CD4-positive, alpha-beta T cell (primary cell): ENCODE measurements at regions of chr16 and their contacts with region 1.

Region 1: DNA sequence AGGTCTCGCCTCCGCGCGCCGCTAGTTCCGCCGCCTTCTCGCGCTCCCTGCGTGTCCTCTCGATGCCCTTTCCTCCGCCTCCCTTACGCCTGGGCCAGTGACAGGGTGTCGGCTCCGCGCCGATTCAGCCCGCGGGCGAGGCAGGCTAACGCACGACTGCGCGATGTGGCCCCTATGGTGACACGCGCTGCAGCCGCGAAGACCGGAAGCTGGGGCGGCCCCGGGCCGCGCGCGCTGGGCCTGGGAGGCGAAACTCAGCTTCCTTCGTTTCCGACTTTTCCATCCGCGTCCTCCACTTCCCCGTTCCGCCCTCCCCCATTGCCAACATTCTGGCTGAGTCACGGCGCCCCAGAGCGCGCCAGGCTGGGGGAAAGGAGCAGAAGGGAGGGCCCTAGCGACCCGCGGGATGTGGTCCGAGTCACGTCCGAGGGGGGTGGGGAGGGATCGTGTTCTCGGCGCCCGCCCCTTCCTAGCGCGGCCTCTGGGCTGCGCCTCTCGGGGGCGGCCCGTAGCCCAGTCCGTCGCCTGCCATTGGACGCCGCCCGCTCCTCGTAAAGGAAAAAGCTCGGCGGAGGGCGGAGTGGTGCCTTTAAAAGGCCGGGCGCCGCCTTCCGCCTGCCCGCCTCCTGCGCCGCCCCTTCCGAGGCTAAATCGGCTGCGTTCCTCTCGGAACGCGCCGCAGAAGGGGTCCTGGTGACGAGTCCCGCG is at the start of gene ALDOA:
- DNase-seq: peak; percentile 85 to 97 (median 93)
- ATAC-seq: peak; percentile 80
- H3K4me3 ChIP-seq: peak within 1 kb of the TSS; percentile 100
- H3K4me3 Mint-ChIP-seq: peak within 1 kb of the TSS; percentile 100
- H3K27ac ChIP-seq: peak within 1 kb of the TSS; percentile 87 to 92
- H3K27ac Mint-ChIP-seq: peak within 1 kb of the TSS; percentile 96
- H3K4me1 ChIP-seq: peaks cover 60% of the 10 kb centered on the region
- H3K4me1 Mint-ChIP-seq: peaks cover 44% of the 10 kb centered on the region
- H3K27me3 ChIP-seq: no peaks in the 10 kb centered on the region
- H3K27me3 Mint-ChIP-seq: no peaks in the 10 kb centered on the region
- CTCF ChIP-seq: no peak
- total RNA-seq, gene ALDOA: 390 to 396 TPM

Region 2: GRCh38 chr16:29973384-29974246 is 91.7 kb before region 1 on chr16 and contains the start of gene TAOK2:
- CTCF ChIA-PET with region 1: no interaction called
- POLR2A ChIA-PET with region 1: interaction called, 12 read pairs
- intact Hi-C with region 1: no loop called
- DNase-seq: peak; percentile 76 to 98 (median 90)
- ATAC-seq: peak; percentile 87
- H3K4me3 ChIP-seq: peak within 1 kb of the TSS; percentile 99
- H3K4me3 Mint-ChIP-seq: peak within 1 kb of the TSS; percentile 98
- H3K27ac ChIP-seq: peak within 1 kb of the TSS; percentile 70 to 83
- H3K27ac Mint-ChIP-seq: peak within 1 kb of the TSS; percentile 84
- H3K4me1 ChIP-seq: peaks cover 39% of the 10 kb centered on the region
- H3K4me1 Mint-ChIP-seq: peaks cover 50% of the 10 kb centered on the region
- H3K27me3 ChIP-seq: no peaks in the 10 kb centered on the region
- H3K27me3 Mint-ChIP-seq: no peaks in the 10 kb centered on the region
- CTCF ChIP-seq: no peak
- total RNA-seq, gene TAOK2: 13.1 to 14.1 TPM

Region 3: GRCh38 chr16:30075507-30076275 is 10.4 kb after region 1 on chr16 and contains the start of gene PPP4C:
- CTCF ChIA-PET with region 1: no interaction called
- POLR2A ChIA-PET with region 1: interaction called, 73 read pairs
- intact Hi-C with region 1: loop called in 1 of 2 experiments (anchors 1 kb)
- DNase-seq: peak; percentile 79 to 96 (median 86)
- ATAC-seq: peak; percentile 87
- H3K4me3 ChIP-seq: peak within 1 kb of the TSS; percentile 98
- H3K4me3 Mint-ChIP-seq: peak within 1 kb of the TSS; percentile 98
- H3K27ac ChIP-seq: peak within 1 kb of the TSS; percentile 77 to 80
- H3K27ac Mint-ChIP-seq: peak within 1 kb of the TSS; percentile 96
- H3K4me1 ChIP-seq: peaks cover 38% of the 10 kb centered on the region
- H3K4me1 Mint-ChIP-seq: peaks cover 39% of the 10 kb centered on the region
- H3K27me3 ChIP-seq: no peaks in the 10 kb centered on the region
- H3K27me3 Mint-ChIP-seq: no peaks in the 10 kb centered on the region
- CTCF ChIP-seq: no peak
- total RNA-seq, gene PPP4C: 83.9 to 87.3 TPM

Region 4: GRCh38 chr16:30112197-30113030 is 47.1 kb after region 1 on chr16:
- CTCF ChIA-PET with region 1: interaction called, 3 read pairs
- POLR2A ChIA-PET with region 1: interaction called, 5 read pairs
- intact Hi-C with region 1: loop called in 1 of 2 experiments (anchors 10 kb)
- DNase-seq: peak in 12 of 14 experiments; percentile 35 to 77 (median 52)
- ATAC-seq: peak; percentile 52
- H3K4me3 ChIP-seq: no peak overlapping the region
- H3K4me3 Mint-ChIP-seq: no peak overlapping the region
- H3K27ac ChIP-seq: no peak overlapping the region
- H3K27ac Mint-ChIP-seq: no peak overlapping the region
- H3K4me1 ChIP-seq: peaks cover 40% of the 10 kb centered on the region
- H3K4me1 Mint-ChIP-seq: peaks cover 4% of the 10 kb centered on the region
- H3K27me3 ChIP-seq: no peaks in the 10 kb centered on the region
- H3K27me3 Mint-ChIP-seq: no peaks in the 10 kb centered on the region
- CTCF ChIP-seq: peak; percentile 71

Region 5: DNA sequence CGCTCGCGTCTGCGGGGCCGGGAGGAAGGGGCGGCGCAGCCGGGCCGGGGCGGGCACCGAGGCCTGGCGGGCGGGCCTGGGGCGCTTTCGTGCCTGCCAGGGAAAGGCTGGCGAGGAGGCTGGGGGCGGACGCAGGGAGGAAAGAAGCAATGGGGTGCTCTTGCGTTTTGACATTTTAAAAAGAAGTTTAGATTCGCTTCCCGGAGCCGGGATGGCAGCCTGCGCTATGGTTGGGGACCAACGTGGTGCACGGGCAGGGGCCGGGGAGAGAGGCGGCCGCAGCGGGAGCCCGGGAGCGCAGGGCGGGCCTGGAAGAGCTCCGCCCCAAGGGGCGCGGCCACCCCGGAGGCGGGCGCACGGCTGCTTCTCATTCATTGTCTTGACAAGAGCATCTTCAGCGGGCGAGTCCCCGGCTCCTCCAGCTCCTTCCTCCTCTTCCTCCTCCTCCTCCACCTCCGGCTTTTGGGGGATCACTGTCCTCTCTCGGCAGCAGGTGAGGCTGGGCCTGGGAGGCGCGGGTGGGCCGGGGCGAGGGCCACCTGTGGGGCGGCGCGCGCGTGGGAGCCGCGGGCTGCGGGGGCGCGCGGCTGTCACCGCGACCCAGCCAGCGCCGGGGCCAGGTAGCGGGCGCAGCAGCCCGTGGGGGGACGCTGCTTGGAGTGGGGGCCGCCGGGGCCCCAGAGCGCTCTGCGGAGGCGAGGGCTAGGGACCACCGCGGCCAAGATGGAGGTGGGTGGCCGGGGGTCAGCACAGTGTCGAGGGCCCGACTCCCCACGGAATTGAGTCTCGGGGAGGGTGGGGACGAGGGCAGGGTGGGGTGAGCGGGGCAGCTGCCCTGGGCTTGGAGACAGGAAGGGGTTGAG is 118.2 kb after region 1 on chr16 and contains the start of gene CORO1A:
- CTCF ChIA-PET with region 1: interaction called, 4 read pairs
- POLR2A ChIA-PET with region 1: interaction called, 106 read pairs
- intact Hi-C with region 1: no loop called
- DNase-seq: peak; percentile 68 to 90 (median 82)
- ATAC-seq: peak; percentile 45
- H3K4me3 ChIP-seq: peak within 1 kb of the TSS; percentile 100
- H3K4me3 Mint-ChIP-seq: peak within 1 kb of the TSS; percentile 99
- H3K27ac ChIP-seq: peak within 1 kb of the TSS; percentile 89 to 96
- H3K27ac Mint-ChIP-seq: peak within 1 kb of the TSS; percentile 98
- H3K4me1 ChIP-seq: peaks cover 51% of the 10 kb centered on the region
- H3K4me1 Mint-ChIP-seq: peaks cover 39% of the 10 kb centered on the region
- H3K27me3 ChIP-seq: no peaks in the 10 kb centered on the region
- H3K27me3 Mint-ChIP-seq: no peaks in the 10 kb centered on the region
- CTCF ChIP-seq: no peak
- total RNA-seq, gene CORO1A: 411 to 416 TPM

Region 6: GRCh38 chr16:30378236-30379204 is 313.2 kb after region 1 on chr16:
- CTCF ChIA-PET with region 1: no interaction called
- POLR2A ChIA-PET with region 1: interaction called, 16 read pairs
- intact Hi-C with region 1: no loop called
- DNase-seq: peak; percentile 98 to 100 (median 100)
- ATAC-seq: peak; percentile 74
- H3K4me3 ChIP-seq: peak overlapping the region; percentile 71
- H3K4me3 Mint-ChIP-seq: peak overlapping the region; percentile 99
- H3K27ac ChIP-seq: peak overlapping the region; percentile 100
- H3K27ac Mint-ChIP-seq: peak overlapping the region; percentile 100
- H3K4me1 ChIP-seq: peaks cover 79% of the 10 kb centered on the region
- H3K4me1 Mint-ChIP-seq: peaks cover 60% of the 10 kb centered on the region
- H3K27me3 ChIP-seq: no peaks in the 10 kb centered on the region
- H3K27me3 Mint-ChIP-seq: no peaks in the 10 kb centered on the region
- CTCF ChIP-seq: no peak

Region 7: DNA sequence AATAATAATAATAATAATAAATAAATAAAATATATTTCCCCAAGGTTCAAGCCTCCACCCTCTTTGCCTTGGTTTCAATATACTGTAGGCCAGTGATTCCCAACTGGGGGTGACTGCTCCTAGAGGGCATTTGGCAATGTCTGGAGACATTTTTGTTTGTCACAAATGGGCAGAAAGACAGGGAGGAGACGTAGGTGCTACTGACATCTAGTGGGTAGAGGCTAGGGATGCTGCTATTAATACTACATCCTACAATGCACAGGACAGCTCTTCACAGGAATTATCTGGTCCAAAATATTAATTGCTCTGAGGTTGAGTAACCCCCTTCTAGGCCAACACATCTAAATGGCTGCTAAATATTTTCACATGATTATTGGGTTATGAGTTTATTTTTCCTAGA is 572.6 kb after region 1 on chr16:
- CTCF ChIA-PET with region 1: no interaction called
- POLR2A ChIA-PET with region 1: no interaction called
- intact Hi-C with region 1: loop called in 1 of 2 experiments (anchors 10 kb)
- DNase-seq: peak in 4 of 14 experiments; percentile 19 to 75 (median 63)
- ATAC-seq: peak; percentile 17
- H3K4me3 ChIP-seq: no peak overlapping the region
- H3K4me3 Mint-ChIP-seq: peak overlapping the region; percentile 48
- H3K27ac ChIP-seq: no peak overlapping the region
- H3K27ac Mint-ChIP-seq: no peak overlapping the region
- H3K4me1 ChIP-seq: peaks cover 19% of the 10 kb centered on the region
- H3K4me1 Mint-ChIP-seq: peaks cover 17% of the 10 kb centered on the region
- H3K27me3 ChIP-seq: no peaks in the 10 kb centered on the region
- H3K27me3 Mint-ChIP-seq: no peaks in the 10 kb centered on the region
- CTCF ChIP-seq: peak; percentile 24